ENCODE measurements at regions of chr5 and their contacts with region 1.

Region 1: GRCh38 chr5:115749016-115749415 is 67.4 kb downstream of the CDO1 start:
- DNase-seq: no peak
- ATAC-seq: no peak
- H3K4me3 Mint-ChIP-seq: no peak overlapping the region
- H3K27ac Mint-ChIP-seq: no peak overlapping the region
- H3K4me1 Mint-ChIP-seq: peaks cover 3% of the 10 kb centered on the region
- H3K27me3 Mint-ChIP-seq: peaks cover 20% of the 10 kb centered on the region

Region 2: GRCh38 chr5:115725520-115725919 is 23.5 kb before region 1 on chr5:
- CTCF ChIA-PET with region 1: no interaction called
- POLR2A ChIA-PET with region 1: interaction called, 10 read pairs
- intact Hi-C with region 1: no loop called
- DNase-seq: no peak
- ATAC-seq: no peak
- H3K4me3 Mint-ChIP-seq: no peak overlapping the region
- H3K27ac Mint-ChIP-seq: no peak overlapping the region
- H3K4me1 Mint-ChIP-seq: no peaks in the 10 kb centered on the region
- H3K27me3 Mint-ChIP-seq: peaks cover 27% of the 10 kb centered on the region

Region 3: GRCh38 chr5:115767424-115767823 is 18.4 kb after region 1 on chr5:
- CTCF ChIA-PET with region 1: no interaction called
- POLR2A ChIA-PET with region 1: no interaction called
- intact Hi-C with region 1: no loop called
- DNase-seq: no peak
- ATAC-seq: no peak
- H3K4me3 Mint-ChIP-seq: no peak overlapping the region
- H3K27ac Mint-ChIP-seq: no peak overlapping the region
- H3K4me1 Mint-ChIP-seq: no peaks in the 10 kb centered on the region
- H3K27me3 Mint-ChIP-seq: peaks cover 18% of the 10 kb centered on the region

Measured in activated CD4-positive, alpha-beta T cell treated with anti-CD3 and anti-CD28 coated beads for 36 hours (primary cell).